ENCODE measurements at regions of chr10 and their contacts with region 1.

Region 1: GRCh38 chr10:102629661-102630614 is 14.3 kb upstream of the TRIM8 start:
- DNase-seq: peak; percentile 85 to 88
- H3K4me3 ChIP-seq: peak overlapping the region; percentile 23; the same call in 1 of the 2 replicates
- H3K27ac ChIP-seq: peak overlapping the region; percentile 84
- H3K4me1 ChIP-seq: peaks cover 79% of the 10 kb centered on the region
- H3K27me3 ChIP-seq: no peaks in the 10 kb centered on the region
- CTCF ChIP-seq: no peak

Region 2: DNA sequence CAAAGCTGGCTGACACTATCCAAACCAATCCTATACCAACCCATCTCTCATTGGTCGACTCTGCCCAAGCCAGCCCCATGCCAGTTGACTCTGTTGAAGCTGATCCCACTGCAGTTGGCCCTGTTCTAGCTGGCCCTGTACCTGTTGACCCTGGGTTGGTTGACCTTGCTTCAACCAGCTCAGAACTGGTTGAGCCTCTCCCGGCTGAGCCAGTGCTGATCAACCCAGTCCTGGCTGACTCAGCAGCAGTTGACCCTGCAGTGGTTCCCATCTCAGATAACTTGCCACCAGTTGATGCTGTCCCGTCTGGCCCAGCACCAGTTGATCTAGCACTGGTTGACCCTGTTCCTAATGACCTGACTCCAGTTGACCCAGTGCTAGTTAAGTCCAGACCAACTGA is 489.8 kb before region 1 on chr10:
- CTCF ChIA-PET with region 1: interaction called, 11 read pairs
- POLR2A ChIA-PET with region 1: no interaction called
- intact Hi-C with region 1: no loop called
- DNase-seq: no peak
- H3K4me3 ChIP-seq: no peak overlapping the region
- H3K27ac ChIP-seq: no peak overlapping the region
- H3K4me1 ChIP-seq: peaks cover 2% of the 10 kb centered on the region
- H3K27me3 ChIP-seq: no peaks in the 10 kb centered on the region
- CTCF ChIP-seq: no peak

Region 3: DNA sequence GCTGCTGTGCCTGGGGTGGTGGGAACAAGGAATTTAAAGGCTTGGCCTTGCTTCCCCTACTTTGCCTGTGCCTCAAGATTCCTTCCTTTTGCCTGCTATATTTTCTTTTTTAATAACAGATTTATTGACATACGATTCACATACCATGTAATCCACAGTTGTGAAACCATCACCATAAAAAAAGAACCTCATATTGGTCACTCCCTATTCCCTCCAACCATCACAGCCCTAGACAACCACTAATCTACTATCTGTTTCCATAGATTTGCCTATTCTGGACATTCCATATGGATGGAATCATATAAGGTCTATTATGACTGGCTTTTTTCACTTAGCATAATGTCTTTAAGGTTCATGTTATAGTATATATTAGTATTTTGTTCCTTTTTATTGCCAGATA is 44.9 kb before region 1 on chr10:
- CTCF ChIA-PET with region 1: no interaction called
- POLR2A ChIA-PET with region 1: no interaction called
- intact Hi-C with region 1: no loop called
- DNase-seq: no peak
- H3K4me3 ChIP-seq: no peak overlapping the region
- H3K27ac ChIP-seq: no peak overlapping the region
- H3K4me1 ChIP-seq: no peaks in the 10 kb centered on the region
- H3K27me3 ChIP-seq: no peaks in the 10 kb centered on the region
- CTCF ChIP-seq: no peak

Region 4: DNA sequence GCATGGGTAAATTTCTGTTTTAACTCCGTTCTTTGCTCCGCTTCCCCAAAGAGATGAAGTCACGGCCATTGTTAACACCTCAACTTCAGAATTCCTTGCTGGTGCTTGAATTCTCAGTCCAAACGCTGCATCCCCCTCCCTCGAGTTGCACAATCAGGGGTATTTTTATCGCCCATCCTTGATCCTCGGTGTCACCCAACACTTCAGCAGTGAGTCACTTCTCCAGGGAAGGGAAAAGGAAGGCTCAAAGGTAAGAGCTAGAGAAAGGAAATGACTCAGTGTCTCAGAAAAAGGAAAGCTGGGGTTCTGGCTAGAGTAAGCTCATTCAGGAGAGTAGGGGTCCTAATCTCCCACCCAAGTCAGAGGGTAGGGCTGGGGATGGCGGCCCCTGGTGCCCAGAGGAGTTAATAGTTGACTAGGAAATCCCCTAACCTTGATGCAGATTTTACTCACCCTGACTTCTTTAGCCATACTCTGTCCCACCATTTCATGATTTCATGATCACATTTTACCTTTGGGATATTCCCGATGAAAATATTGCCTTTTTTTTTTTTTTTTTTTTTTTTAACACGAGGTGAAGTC is 25.5 kb before region 1 on chr10:
- CTCF ChIA-PET with region 1: no interaction called
- POLR2A ChIA-PET with region 1: interaction called, 3 read pairs
- intact Hi-C with region 1: loop called (anchors 2 kb)
- DNase-seq: peak; percentile 68 to 81
- H3K4me3 ChIP-seq: no peak overlapping the region; the same call in 1 of the 2 replicates
- H3K27ac ChIP-seq: peak overlapping the region; percentile 90
- H3K4me1 ChIP-seq: peaks cover 35% of the 10 kb centered on the region
- H3K27me3 ChIP-seq: no peaks in the 10 kb centered on the region
- CTCF ChIP-seq: no peak

Measured in PC-9 (cell line).